ENCODE measurements at regions of chr9 and their contacts with region 1.

Region 1: GRCh38 chr9:21252721-21253547 is 13.1 kb upstream of the IFNA14 start:
- DNase-seq: peak; percentile 40 to 42
- ATAC-seq: peak; percentile 90 to 94
- H3K4me3 ChIP-seq: no peak overlapping the region
- H3K27ac ChIP-seq: no peak overlapping the region
- H3K4me1 ChIP-seq: no peaks in the 10 kb centered on the region
- CTCF ChIP-seq: peak; percentile 64
- EP300 ChIP-seq: no peak
- POLR2A ChIP-seq: no peak
- RAD21 ChIP-seq: peak; percentile 56 to 69

Region 2: DNA sequence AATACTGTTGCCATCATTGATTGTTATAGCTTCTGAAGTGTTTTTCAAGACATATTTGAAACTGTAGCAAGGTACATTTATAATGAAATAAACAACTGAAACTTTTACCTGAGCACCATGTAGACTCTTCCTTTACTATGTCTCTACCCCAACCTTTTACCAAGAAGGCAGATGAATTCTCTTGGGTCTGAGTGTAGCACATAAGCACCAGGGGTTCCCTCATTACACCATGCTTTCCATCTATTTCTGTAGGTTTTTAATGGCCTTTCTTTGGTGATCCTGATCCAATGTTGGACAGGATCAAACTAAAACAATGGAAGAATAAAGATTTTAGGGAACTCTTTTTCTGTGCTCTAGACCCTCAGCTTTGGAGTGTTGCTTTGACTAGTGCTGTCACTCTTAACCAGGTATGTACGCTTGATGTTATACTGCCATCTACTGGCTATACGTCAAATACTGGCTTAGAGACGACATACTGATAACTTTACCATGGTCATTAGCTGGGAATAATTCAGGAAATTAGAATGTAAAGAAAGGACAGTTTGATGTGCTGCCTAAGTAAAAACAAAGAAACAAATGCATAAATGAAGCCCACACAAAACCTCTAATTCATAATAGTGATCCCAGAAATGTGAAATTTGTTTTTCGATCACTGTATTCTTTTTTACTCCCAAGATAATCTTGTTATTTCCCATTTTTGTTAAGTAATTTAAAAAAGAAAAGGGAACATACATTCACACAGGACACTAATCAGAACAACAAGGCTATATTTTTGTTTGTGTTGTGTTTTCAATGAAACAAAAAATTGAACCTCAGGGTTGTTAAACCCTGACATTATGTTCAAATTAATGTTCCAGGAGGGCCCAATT is 142.0 kb before region 1 on chr9:
- CTCF ChIA-PET with region 1: no interaction called
- POLR2A ChIA-PET with region 1: no interaction called
- DNase-seq: peak; percentile 40 to 77
- ATAC-seq: peak; percentile 97 to 99
- H3K4me3 ChIP-seq: no peak overlapping the region
- H3K27ac ChIP-seq: no peak overlapping the region
- H3K4me1 ChIP-seq: no peaks in the 10 kb centered on the region
- CTCF ChIP-seq: peak; percentile 92
- EP300 ChIP-seq: no peak
- POLR2A ChIP-seq: no peak
- RAD21 ChIP-seq: peak; percentile 91 to 95

Region 3: GRCh38 chr9:21239911-21240310 is 13.0 kb before region 1 on chr9 and contains the start of gene IFNA14:
- CTCF ChIA-PET with region 1: interaction called, 21 read pairs
- POLR2A ChIA-PET with region 1: no interaction called
- DNase-seq: no peak
- ATAC-seq: no peak
- H3K4me3 ChIP-seq: no peak within 1 kb of the TSS
- H3K27ac ChIP-seq: no peak within 1 kb of the TSS
- H3K4me1 ChIP-seq: no peaks in the 10 kb centered on the region
- CTCF ChIP-seq: no peak
- EP300 ChIP-seq: no peak
- POLR2A ChIP-seq: no peak
- RAD21 ChIP-seq: no peak
- polyA plus RNA-seq, gene IFNA14: not detected in 2 replicates

Region 4: GRCh38 chr9:21267485-21268346 is 14.8 kb after region 1 on chr9:
- CTCF ChIA-PET with region 1: interaction called, 40 read pairs
- POLR2A ChIA-PET with region 1: no interaction called
- DNase-seq: no peak
- ATAC-seq: no peak
- H3K4me3 ChIP-seq: no peak overlapping the region
- H3K27ac ChIP-seq: no peak overlapping the region
- H3K4me1 ChIP-seq: no peaks in the 10 kb centered on the region
- CTCF ChIP-seq: no peak
- EP300 ChIP-seq: no peak
- POLR2A ChIP-seq: no peak
- RAD21 ChIP-seq: no peak

Region 5: DNA sequence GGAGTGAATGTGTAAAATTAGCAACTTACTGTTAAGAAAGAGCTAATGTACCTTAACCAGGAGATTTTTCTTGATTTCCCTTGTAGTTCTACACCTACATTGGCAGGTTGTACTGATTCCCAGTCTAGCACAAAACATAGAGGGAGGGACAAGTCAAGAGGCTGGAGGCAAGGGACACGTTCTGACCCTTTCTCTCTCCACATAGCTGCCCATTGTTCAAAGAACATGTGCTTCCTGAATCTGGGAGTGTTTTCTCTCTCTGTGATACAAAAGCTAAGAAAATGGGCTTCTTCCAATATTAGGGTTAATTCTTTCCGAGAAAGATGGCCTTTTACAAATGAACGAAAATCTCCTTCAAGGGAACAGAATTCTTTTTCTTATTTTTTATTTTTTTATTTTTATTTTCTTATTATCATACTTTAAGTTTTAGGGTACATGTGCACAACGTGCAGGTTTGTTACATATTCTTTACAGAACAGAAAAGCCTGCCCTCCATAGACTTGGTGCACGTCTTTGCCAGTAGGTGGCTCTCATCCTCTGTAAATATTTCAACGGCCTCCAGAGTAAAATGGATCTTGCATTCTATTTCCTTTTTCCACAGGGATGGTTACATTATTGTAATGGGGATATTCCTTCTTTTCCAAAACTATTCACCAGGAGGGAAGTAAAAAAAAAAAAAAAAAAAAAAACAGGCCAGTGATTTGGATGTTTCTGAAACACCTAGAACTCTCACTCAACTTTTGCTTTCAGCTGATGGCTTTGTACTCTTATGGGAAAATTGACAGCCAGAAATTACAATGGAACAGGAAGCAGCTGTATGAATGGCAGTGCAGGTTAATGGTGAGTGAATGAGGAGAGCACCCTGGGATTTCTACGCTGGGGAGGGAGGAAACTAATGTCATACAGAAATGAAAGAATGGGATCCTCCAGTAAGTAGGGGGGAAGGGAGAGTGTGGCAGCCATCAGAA is 65.3 kb after region 1 on chr9:
- CTCF ChIA-PET with region 1: interaction called, 12 read pairs
- POLR2A ChIA-PET with region 1: no interaction called
- DNase-seq: peak in 1 of 2 experiments; percentile 58
- ATAC-seq: peak; percentile 77 to 94
- H3K4me3 ChIP-seq: no peak overlapping the region
- H3K27ac ChIP-seq: no peak overlapping the region
- H3K4me1 ChIP-seq: no peaks in the 10 kb centered on the region
- CTCF ChIP-seq: peak; percentile 80
- EP300 ChIP-seq: no peak
- POLR2A ChIP-seq: no peak
- RAD21 ChIP-seq: peak; percentile 76

Measured in A549 (cell line).